ENCODE measurements at regions of chr12 and their contacts with region 1.

Region 1: GRCh38 chr12:12916135-12916944 is 25.0 kb downstream of the GPRC5A start:
- DNase-seq: peak; percentile 96
- H3K4me3 Mint-ChIP-seq: no peak overlapping the region
- H3K27ac Mint-ChIP-seq: no peak overlapping the region
- H3K4me1 Mint-ChIP-seq: peaks cover 3% of the 10 kb centered on the region
- H3K27me3 Mint-ChIP-seq: peaks cover 10% of the 10 kb centered on the region

Region 2: DNA sequence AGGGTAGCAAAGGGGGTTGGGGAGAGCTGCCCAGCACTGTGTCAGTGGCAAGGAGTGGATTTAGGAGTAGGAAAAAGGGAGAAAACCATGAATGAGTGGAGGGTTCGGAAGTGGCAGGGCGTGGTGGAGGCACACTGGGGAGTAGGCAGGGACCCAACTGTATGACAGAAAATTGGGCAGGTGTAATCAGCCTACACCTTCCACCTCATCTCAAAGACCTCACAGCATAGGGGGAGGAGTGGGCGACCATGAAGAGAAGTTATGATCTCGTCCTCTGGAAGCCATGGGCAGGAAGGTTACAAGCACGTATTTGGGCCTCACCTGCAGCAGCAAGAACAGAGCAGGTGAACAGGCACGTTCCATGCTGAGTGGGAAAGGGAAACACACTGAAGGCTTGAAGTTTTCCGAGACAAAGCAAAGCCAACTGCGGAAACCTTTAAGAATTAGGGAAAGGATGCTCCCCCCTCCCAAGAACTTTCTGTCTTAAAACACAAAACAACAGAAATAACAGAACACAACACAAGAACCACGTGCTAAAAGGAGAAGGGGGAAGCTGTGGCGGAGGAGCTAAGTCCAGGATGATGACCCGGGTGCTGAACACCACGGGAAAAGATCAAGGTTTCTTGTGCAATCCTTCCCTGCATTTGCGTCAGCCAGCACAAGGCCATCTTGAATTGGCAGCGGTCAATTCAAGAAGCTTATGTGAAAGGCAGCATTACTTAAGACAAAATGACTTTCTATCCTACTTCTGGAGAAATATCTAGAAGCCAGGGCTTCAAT is 315.9 kb before region 1 on chr12:
- intact Hi-C with region 1: no loop called
- DNase-seq: no peak
- H3K4me3 Mint-ChIP-seq: no peak overlapping the region
- H3K27ac Mint-ChIP-seq: no peak overlapping the region
- H3K4me1 Mint-ChIP-seq: no peaks in the 10 kb centered on the region
- H3K27me3 Mint-ChIP-seq: peaks cover 2% of the 10 kb centered on the region

Region 3: DNA sequence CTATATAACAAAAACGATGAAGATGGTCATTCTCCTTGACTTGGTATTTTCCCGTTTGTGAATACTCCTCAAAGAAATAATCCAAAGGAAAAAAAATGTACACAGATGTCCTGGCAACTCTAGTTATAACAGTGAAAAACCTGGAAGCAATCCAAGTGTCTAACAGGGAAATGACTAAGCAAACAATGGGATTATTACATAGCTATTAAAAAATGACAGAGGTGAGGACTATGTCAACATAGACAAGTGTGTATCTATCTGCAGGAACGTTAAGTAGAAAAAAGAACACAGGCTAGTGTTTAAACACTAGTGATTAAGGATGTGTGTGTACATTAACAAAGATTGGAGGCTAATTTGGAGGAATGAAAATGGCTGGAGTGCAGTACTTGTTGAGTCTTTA is 136.8 kb before region 1 on chr12:
- intact Hi-C with region 1: no loop called
- DNase-seq: no peak
- H3K4me3 Mint-ChIP-seq: no peak overlapping the region
- H3K27ac Mint-ChIP-seq: no peak overlapping the region
- H3K4me1 Mint-ChIP-seq: no peaks in the 10 kb centered on the region
- H3K27me3 Mint-ChIP-seq: no peaks in the 10 kb centered on the region

Region 4: DNA sequence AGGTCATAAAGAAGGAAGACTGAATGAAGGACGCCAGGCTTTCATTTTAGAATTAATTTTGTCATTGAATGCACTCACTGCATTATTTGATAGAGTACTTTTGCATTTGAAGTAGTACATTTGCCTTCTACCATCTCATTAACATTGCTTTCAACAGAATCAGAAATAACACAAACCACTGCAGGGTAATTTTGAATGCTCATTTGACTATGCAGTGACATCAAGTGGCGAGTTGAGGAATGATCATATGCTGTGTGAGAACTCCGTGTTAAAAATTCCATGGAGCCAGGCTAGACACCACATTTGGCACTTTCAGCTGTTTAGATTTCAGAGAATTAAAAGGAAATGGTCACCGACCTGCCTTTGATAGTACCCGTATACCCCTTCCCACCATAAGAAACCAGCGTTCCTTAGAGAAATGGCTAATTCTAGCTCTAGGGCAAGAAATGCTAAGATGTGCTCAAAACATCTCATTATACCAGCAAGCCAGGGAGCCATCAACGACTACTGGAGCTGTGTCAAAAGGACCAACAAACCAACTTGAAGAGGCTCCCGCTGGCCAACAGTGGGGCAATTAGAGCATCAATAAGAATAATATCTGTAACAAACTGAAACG is 67.2 kb after region 1 on chr12:
- intact Hi-C with region 1: loop called (anchors 1 kb)
- DNase-seq: peak; percentile 68
- H3K4me3 Mint-ChIP-seq: no peak overlapping the region
- H3K27ac Mint-ChIP-seq: no peak overlapping the region
- H3K4me1 Mint-ChIP-seq: no peaks in the 10 kb centered on the region
- H3K27me3 Mint-ChIP-seq: no peaks in the 10 kb centered on the region

Region 5: GRCh38 chr12:12999959-13000615 is 83.7 kb after region 1 on chr12 and contains the start of gene HEBP1:
- intact Hi-C with region 1: loop called (anchors 5 kb)
- DNase-seq: peak; percentile 98
- H3K4me3 Mint-ChIP-seq: peak within 1 kb of the TSS; percentile 91
- H3K27ac Mint-ChIP-seq: peak within 1 kb of the TSS; percentile 89
- H3K4me1 Mint-ChIP-seq: peaks cover 30% of the 10 kb centered on the region
- H3K27me3 Mint-ChIP-seq: peaks cover 25% of the 10 kb centered on the region
- total RNA-seq, gene HEBP1: 12.0 and 13.8 TPM in 2 replicates

Region 6: GRCh38 chr12:13044002-13044905 is 127.9 kb after region 1 on chr12 and contains the start of gene FAM234B:
- intact Hi-C with region 1: loop called (anchors 5 kb)
- DNase-seq: peak; percentile 92
- H3K4me3 Mint-ChIP-seq: peak within 1 kb of the TSS; percentile 84
- H3K27ac Mint-ChIP-seq: peak within 1 kb of the TSS; percentile 75
- H3K4me1 Mint-ChIP-seq: peaks cover 19% of the 10 kb centered on the region
- H3K27me3 Mint-ChIP-seq: peaks cover 29% of the 10 kb centered on the region
- total RNA-seq, gene FAM234B: 8.6 and 9.0 TPM in 2 replicates

Region 7: GRCh38 chr12:13211859-13212664 is 295.7 kb after region 1 on chr12:
- intact Hi-C with region 1: loop called (anchors 1 kb)
- DNase-seq: peak; percentile 92
- H3K4me3 Mint-ChIP-seq: peak overlapping the region; percentile 4
- H3K27ac Mint-ChIP-seq: peak overlapping the region; percentile 54
- H3K4me1 Mint-ChIP-seq: peaks cover 34% of the 10 kb centered on the region
- H3K27me3 Mint-ChIP-seq: no peaks in the 10 kb centered on the region

Region 8: GRCh38 chr12:13233830-13234641 is 317.7 kb after region 1 on chr12:
- intact Hi-C with region 1: loop called (anchors 2 kb)
- DNase-seq: peak; percentile 82
- H3K4me3 Mint-ChIP-seq: no peak overlapping the region
- H3K27ac Mint-ChIP-seq: no peak overlapping the region
- H3K4me1 Mint-ChIP-seq: no peaks in the 10 kb centered on the region
- H3K27me3 Mint-ChIP-seq: peaks cover 13% of the 10 kb centered on the region

Region 9: DNA sequence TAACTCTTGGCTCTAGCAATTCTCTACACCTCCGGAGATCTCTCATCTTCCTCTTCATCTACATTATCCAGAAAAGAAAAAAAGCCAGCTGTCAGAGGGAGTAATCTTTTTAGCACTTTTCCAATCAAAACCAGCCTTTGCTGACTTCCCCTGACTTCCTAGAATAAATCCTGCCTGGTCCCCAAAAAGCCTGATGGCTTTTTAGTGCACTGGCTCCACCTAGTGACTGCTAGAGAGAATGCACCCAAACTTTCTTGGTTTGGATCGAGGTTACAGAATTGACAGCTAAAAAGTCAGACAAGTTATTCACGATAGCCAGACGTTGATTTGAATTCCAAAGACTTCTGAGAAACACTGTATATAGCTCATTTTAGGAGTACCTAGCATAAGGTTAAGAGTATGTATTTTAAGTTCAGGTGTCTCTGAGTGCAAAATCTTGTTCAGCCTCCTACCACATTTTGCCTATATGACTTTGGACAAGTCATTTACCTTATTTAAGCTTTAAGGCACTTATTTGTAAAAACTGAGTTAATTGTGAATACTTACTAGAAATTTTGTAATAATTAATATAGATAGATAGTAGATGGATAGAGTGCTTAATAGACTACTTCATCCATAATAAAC is 1250.8 kb after region 1 on chr12:
- intact Hi-C with region 1: loop called (anchors 5 kb)
- DNase-seq: peak; percentile 81
- H3K4me3 Mint-ChIP-seq: no peak overlapping the region
- H3K27ac Mint-ChIP-seq: no peak overlapping the region
- H3K4me1 Mint-ChIP-seq: peaks cover 3% of the 10 kb centered on the region
- H3K27me3 Mint-ChIP-seq: peaks cover 7% of the 10 kb centered on the region

Measured in activated CD4-positive, alpha-beta T cell treated with anti-CD3 and anti-CD28 coated beads, Interleukin-2, amount 10 ng/mL, durations not matched to agents 24 days and 14 days (primary cell).